ENCODE measurements at regions of chr13 and their contacts with region 1.

Region 1: GRCh38 chr13:40485611-40486517 is 180.6 kb downstream of the FOXO1 start:
- DNase-seq: peak; percentile 86
- H3K4me3 Mint-ChIP-seq: peak overlapping the region; percentile 8
- H3K27ac Mint-ChIP-seq: peak overlapping the region; percentile 83
- H3K4me1 Mint-ChIP-seq: peaks cover 82% of the 10 kb centered on the region
- H3K27me3 Mint-ChIP-seq: no peaks in the 10 kb centered on the region

Region 2: GRCh38 chr13:40069173-40070044 is 416.5 kb before region 1 on chr13:
- CTCF ChIA-PET with region 1: interaction called, 3 read pairs
- intact Hi-C with region 1: loop called (anchors 1 kb)
- DNase-seq: peak; percentile 87
- H3K4me3 Mint-ChIP-seq: peak overlapping the region; percentile 12
- H3K27ac Mint-ChIP-seq: peak overlapping the region; percentile 27
- H3K4me1 Mint-ChIP-seq: peaks cover 29% of the 10 kb centered on the region
- H3K27me3 Mint-ChIP-seq: no peaks in the 10 kb centered on the region

Region 3: DNA sequence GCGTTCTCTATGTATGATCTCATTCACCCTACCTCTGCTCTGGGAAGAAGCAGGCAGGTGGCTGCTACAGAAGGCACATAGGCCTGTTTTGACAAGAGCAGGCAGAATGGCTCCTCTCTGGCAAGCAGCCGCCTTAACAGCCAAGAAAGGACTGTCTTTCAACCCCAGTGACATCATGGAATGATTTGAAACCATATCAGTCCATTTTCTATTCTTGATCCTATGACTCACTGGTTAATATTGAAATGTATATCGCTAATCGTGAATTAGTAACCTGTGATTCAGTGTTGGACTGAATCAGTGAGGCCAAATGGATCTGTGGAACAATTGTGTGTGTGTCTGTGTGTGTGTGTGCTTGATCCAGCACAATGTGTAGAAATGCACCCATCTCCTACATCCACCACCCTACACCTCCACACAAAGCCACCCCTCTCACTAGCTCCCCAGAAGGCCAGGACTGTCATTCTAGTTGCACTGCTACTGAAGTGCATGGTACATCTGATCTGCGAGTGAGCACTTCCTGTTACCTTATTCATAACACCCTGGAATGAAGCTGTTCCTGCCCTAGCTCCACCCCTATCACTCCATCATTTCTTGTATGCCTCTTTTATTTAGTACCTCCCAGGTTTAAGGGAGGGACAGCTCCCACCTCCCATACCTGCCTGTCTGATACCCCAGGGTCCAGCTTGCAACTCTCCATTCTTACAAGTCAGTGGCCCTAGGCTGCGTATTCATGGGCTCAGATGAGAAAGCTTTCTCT is 279.4 kb before region 1 on chr13:
- CTCF ChIA-PET with region 1: no interaction called
- intact Hi-C with region 1: loop called (anchors 1 kb)
- DNase-seq: peak; percentile 74
- H3K4me3 Mint-ChIP-seq: peak overlapping the region; percentile 64
- H3K27ac Mint-ChIP-seq: peak overlapping the region; percentile 100
- H3K4me1 Mint-ChIP-seq: peaks cover 73% of the 10 kb centered on the region
- H3K27me3 Mint-ChIP-seq: no peaks in the 10 kb centered on the region

Region 4: GRCh38 chr13:40318366-40318765 is 167.5 kb before region 1 on chr13:
- CTCF ChIA-PET with region 1: no interaction called
- intact Hi-C with region 1: loop called (anchors 5 kb)
- DNase-seq: peak; percentile 23
- H3K4me3 Mint-ChIP-seq: no peak overlapping the region
- H3K27ac Mint-ChIP-seq: no peak overlapping the region
- H3K4me1 Mint-ChIP-seq: peaks cover 64% of the 10 kb centered on the region
- H3K27me3 Mint-ChIP-seq: no peaks in the 10 kb centered on the region

Region 5: DNA sequence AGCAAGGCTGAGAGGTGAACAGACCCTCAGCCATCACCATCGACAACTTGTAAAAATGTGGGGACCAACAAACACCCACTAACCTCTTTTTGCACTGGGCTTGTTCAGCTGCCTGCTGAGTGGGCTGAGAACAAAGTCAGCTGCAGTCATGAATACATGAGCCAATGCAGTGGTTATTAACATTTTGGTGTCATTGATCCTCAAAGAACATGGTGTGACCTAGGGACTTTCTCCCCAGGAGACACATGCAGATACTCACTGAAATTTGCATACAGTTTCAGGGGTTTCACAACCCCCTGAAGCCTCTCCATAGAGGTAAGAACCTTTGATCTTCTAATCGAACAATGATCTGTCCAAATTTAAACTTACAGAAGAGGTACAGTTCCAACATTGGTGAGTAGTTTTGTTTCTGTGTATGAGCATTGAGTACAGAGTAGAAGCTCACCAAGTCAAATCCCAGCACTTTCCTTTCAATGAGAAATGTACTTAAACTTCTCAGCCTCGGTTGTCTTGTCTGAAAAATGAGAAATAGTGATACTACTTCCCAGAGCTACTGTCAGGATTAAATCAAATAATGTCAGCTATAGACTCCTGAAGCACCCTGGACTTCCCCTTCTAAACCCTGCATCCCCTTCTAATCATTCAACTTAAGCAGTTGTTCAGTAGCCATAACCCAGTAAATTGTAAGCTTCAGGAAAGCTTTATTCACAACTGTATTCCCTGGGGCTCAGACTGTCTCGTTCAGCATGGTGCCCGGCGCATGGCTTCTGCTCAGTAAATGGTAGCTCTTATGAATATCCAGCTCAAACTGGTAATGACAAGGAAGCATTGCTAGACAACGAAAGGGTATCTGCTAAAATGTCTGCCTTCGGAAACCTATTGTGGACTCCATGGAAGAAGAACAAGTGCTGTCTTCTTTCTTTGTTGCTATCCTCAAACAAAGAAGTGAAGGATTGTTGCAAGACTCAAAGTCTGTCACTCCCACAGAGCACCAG is 31.9 kb after region 1 on chr13:
- CTCF ChIA-PET with region 1: interaction called, 5 read pairs
- intact Hi-C with region 1: loop called (anchors 1 kb)
- DNase-seq: peak; percentile 57
- H3K4me3 Mint-ChIP-seq: peak overlapping the region; percentile 23
- H3K27ac Mint-ChIP-seq: peak overlapping the region; percentile 87
- H3K4me1 Mint-ChIP-seq: peaks cover 78% of the 10 kb centered on the region
- H3K27me3 Mint-ChIP-seq: no peaks in the 10 kb centered on the region

Region 6: DNA sequence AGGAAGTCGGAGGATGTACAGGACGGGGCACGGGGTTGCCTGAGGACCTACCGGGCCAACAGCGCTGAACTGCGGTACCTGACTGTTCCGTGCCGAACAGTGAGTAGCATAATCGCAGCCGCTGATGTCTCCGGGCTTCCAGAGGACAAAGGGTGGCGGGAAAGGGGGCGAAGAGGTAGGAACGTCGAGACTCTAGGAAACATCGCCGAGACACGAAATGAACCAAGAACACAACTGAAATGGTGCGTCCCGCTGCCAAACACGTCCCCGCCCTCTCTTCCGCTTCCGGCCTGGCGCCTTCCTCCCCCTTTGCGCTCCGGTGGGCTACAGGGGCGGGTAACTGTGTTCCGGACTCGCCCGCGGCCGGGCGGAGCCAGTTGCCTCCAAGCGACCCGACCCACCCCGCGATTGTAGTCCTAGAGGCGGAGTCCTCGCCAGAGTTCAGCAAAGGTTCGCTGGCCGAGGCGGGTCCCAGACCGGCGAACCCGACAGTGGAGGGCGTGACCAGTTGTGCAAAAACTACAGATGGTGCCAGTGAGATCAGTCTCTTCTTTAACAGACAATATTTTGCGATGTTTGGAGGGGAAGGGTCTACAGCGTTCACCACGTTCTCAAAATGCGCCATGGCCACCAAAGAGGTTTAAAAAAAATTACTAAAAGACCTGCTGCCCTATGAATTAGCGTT is 285.2 kb after region 1 on chr13 and contains the start of gene MRPS31:
- CTCF ChIA-PET with region 1: no interaction called
- intact Hi-C with region 1: loop called (anchors 10 kb)
- DNase-seq: peak; percentile 95
- H3K4me3 Mint-ChIP-seq: peak within 1 kb of the TSS; percentile 98
- H3K27ac Mint-ChIP-seq: peak within 1 kb of the TSS; percentile 95
- H3K4me1 Mint-ChIP-seq: peaks cover 33% of the 10 kb centered on the region
- H3K27me3 Mint-ChIP-seq: no peaks in the 10 kb centered on the region
- total RNA-seq, gene MRPS31: 28.4 to 28.8 TPM